Upper lobe of right lung (tissue), 1 donor: ENCODE measurements at regions of chr12 and their contacts with region 1.

Region 1: GRCh38 chr12:49707128-49707811 is at the start of gene FMNL3:
- DNase-seq: peak; percentile 99
- ATAC-seq: peak; percentile 98
- H3K4me3 ChIP-seq: peak within 1 kb of the TSS; percentile 88
- H3K27ac ChIP-seq: peak within 1 kb of the TSS; percentile 92
- H3K4me1 ChIP-seq: peaks cover 37% of the 10 kb centered on the region
- H3K27me3 ChIP-seq: no peaks in the 10 kb centered on the region
- CTCF ChIP-seq: peak; percentile 96
- total RNA-seq, gene FMNL3: 40.3 TPM

Region 2: GRCh38 chr12:49580572-49581535 is 126.4 kb before region 1 on chr12:
- intact Hi-C with region 1: no loop called
- DNase-seq: no peak
- ATAC-seq: peak; percentile 91
- H3K4me3 ChIP-seq: no peak overlapping the region
- H3K27ac ChIP-seq: no peak overlapping the region
- H3K4me1 ChIP-seq: peaks cover 14% of the 10 kb centered on the region
- H3K27me3 ChIP-seq: no peaks in the 10 kb centered on the region
- CTCF ChIP-seq: peak; percentile 86

Region 3: DNA sequence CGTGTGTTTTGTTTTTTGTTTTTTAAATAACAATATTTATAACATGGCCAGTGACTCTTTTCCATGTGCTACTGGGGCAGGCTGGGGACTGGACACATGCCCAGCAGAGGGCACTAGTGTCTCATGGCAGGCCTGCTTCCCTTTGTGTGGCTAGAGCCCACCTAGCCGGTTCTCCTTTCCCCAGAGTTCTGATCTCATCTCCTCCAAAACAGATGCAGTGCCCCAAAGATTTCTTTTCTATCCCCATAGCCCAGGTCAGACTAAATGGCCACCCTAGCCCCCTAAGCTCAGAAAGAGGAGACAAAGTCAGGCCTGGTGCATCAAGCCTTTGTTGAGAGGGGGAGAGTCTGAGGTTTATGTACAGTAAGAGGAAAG is 62.7 kb before region 1 on chr12:
- intact Hi-C with region 1: loop called (anchors 2 kb)
- DNase-seq: peak; percentile 81
- ATAC-seq: peak; percentile 82
- H3K4me3 ChIP-seq: no peak overlapping the region
- H3K27ac ChIP-seq: peak overlapping the region; percentile 30
- H3K4me1 ChIP-seq: peaks cover 34% of the 10 kb centered on the region
- H3K27me3 ChIP-seq: no peaks in the 10 kb centered on the region
- CTCF ChIP-seq: peak; percentile 96

Region 4: GRCh38 chr12:49893753-49894752 is 186.8 kb after region 1 on chr12:
- intact Hi-C with region 1: no loop called
- DNase-seq: no peak
- ATAC-seq: no peak
- H3K4me3 ChIP-seq: no peak overlapping the region
- H3K27ac ChIP-seq: no peak overlapping the region
- H3K4me1 ChIP-seq: no peaks in the 10 kb centered on the region
- H3K27me3 ChIP-seq: no peaks in the 10 kb centered on the region
- CTCF ChIP-seq: no peak